Left cardiac atrium (tissue), 4 donors: ENCODE measurements at regions of chr3 and their contacts with region 1.

Region 1: GRCh38 chr3:142586803-142587406 is 8.4 kb upstream of the ATR start:
- DNase-seq: no peak
- ATAC-seq: peak; percentile 78 to 81

Region 2: DNA sequence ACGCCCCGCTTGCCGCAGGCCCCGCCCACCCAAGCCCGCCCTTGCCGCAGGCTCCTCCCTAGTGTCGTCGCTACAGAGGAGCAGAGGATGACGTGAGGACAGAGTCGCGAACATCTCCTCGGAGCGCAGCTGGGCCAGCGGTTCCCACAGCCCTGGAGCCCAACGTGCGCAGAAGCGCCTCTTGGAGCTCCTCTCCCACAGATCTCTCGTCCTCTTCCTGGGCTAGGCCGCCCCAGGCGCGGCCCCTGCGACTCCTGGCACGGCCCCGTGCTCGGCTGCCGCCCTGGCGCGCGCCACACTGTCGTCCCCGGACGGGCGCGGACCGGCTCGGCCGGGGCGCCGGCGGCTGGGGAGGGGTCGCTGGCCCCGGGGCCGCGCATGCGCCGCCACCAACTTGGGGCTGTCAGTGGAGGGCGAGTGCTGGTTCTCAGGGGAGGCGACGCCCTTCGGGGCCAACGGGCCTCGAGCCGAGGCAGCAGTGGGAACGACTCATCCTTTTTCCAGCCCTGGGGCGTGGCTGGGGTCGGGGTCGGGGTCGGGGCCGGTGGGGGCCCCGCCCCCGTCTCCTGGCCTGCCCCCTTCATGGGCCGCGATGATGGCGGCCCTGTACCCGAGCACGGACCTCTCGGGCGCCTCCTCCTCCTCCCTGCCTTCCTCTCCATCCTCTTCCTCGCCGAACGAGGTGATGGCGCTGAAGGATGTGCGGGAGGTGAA is 137.2 kb after region 1 on chr3 and contains the start of gene TRPC1:
- intact Hi-C with region 1: loop called in 1 of 2 experiments (anchors 10 kb)
- DNase-seq: peak; percentile 79
- ATAC-seq: peak; percentile 93 to 95
- total RNA-seq, gene TRPC1: 12.2 to 18.6 TPM

Region 3: DNA sequence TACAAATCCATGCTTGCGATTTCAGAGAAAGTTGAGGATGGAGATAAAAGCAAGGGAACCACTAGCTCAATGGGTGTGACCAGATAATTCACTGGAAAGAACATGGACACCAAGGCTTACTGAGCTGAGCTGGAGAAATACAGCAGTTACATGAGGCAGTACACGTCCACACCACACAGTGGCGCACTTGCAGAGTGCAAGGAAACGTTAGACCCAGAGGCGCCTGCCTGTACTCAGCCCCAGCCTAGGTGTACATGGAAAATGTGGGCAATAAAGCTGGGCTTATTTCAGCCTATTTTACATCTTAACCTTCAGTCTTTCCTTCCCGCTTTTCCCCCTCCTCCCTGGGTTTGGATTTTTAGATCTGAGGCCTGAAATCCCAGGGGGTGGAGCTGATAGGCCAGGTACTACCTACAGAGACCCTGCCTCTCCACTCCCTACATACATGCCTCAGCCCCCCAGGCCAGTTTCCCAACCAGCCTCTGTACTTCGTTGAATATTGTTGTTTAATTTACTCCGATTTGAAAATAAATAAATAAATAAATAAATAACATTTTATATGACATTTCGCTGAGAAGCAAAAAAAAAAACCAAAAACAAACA is 241.9 kb after region 1 on chr3:
- intact Hi-C with region 1: loop called in 1 of 2 experiments (anchors 10 kb)
- DNase-seq: peak; percentile 83
- ATAC-seq: peak; percentile 95 to 96

Region 4: DNA sequence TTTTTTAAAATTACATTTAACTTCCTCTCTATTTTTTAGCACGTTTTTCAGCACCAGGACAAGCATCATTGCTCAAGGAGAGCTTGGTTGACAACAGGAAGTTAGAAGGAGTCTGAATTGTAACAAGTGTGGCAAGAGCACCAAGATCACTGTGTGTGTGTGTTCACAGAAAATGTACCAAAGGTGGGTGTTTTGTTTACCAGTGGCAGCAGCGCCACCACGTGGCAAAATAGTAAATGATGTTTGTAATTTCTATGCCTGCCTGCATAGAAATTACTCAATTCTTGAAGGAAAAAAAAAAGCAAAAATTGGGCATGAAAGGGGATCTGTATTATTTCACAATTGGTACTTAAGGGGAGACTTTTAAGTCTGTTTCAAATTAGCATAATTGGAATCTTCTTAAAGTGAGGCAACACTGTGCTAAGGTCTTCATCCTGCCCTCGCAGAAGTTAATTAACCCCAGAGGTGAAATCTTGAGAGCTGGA is 407.1 kb after region 1 on chr3:
- intact Hi-C with region 1: loop called (anchors 5 to 10 kb)
- DNase-seq: peak; percentile 71
- ATAC-seq: peak; percentile 39 to 67